ENCODE measurements at regions of chr11 and their contacts with region 1.

Region 1: DNA sequence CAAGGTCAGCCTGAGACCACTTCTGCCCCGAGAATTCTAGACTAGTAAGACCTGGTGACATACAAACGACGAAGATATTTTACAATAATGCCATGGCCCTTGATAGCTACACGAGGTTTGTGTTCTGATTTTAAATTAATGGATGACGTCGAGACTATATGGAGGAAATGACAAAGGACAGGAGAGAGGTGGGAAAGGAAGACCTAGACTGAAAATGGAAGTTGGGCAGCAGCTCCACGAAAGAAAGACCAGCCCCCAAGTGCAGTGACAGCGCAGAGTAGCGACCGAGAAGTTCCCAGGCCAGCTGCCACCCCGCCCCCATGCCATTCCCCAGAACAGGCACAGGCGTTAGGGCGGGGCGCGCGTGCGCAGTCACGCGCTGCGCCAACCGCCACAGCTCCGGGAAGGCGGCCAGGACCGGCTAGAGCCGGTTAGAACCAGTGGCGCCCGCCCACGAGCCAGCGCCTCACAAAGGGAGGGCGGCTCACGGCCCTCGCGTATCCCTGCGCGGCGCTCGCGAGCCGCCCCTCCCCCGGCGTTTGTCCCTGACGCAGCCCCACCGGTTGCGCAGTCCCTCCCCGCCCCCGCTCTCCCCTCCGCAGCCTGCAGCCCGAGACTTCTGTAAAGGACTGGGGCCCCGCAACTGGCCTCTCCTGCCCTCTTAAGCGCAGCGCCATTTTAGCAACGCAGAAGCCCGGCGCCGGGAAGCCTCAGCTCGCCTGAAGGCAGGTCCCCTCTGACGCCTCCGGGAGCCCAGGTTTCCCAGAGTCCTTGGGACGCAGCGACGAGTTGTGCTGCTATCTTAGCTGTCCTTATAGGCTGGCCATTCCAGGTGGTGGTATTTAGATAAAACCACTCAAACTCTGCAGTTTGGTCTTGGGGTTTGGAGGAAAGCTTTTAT is 1.5 kb upstream of the MALAT1 start:
- DNase-seq: peak; percentile 96 to 99 (median 98)
- ATAC-seq: peak; percentile 77 to 80
- H3K4me3 Mint-ChIP-seq: no peak overlapping the region
- H3K27ac Mint-ChIP-seq: no peak overlapping the region
- H3K4me1 Mint-ChIP-seq: peaks cover 16 to 31% (median 24%) of the 10 kb centered on the region in 4 donors
- H3K27me3 Mint-ChIP-seq: no peaks in the 10 kb centered on the region

Region 2: GRCh38 chr11:65354265-65355012 is 143.0 kb before region 1 on chr11 and contains the start of gene TIGD3:
- POLR2A ChIA-PET with region 1: interaction called, 11 read pairs
- DNase-seq: peak; percentile 94 to 99 (median 96)
- ATAC-seq: peak; percentile 95 to 96
- H3K4me3 Mint-ChIP-seq: peak within 1 kb of the TSS; percentile 84 to 96 (median 93)
- H3K27ac Mint-ChIP-seq: peak within 1 kb of the TSS; percentile 67 to 96 (median 86)
- H3K4me1 Mint-ChIP-seq: peaks cover 12 to 20% (median 17%) of the 10 kb centered on the region in 4 donors
- H3K27me3 Mint-ChIP-seq: no peaks in the 10 kb centered on the region
- polyA plus RNA-seq, gene TIGD3: 0.15 to 0.67 (median 0.21) TPM

Region 3: GRCh38 chr11:65432686-65433582 is 64.5 kb before region 1 on chr11:
- POLR2A ChIA-PET with region 1: interaction called, 2,047 read pairs
- DNase-seq: peak in 5 of 10 donors; percentile 37 to 74 (median 59)
- ATAC-seq: peak; percentile 31 to 54
- H3K4me3 Mint-ChIP-seq: peak overlapping the region in 6 of 10 donors; percentile 11 to 71 (median 48)
- H3K27ac Mint-ChIP-seq: peak overlapping the region; percentile 26 to 100 (median 82)
- H3K4me1 Mint-ChIP-seq: peaks cover 39 to 94% (median 79%) of the 10 kb centered on the region in 4 donors
- H3K27me3 Mint-ChIP-seq: no peaks in the 10 kb centered on the region

Region 4: DNA sequence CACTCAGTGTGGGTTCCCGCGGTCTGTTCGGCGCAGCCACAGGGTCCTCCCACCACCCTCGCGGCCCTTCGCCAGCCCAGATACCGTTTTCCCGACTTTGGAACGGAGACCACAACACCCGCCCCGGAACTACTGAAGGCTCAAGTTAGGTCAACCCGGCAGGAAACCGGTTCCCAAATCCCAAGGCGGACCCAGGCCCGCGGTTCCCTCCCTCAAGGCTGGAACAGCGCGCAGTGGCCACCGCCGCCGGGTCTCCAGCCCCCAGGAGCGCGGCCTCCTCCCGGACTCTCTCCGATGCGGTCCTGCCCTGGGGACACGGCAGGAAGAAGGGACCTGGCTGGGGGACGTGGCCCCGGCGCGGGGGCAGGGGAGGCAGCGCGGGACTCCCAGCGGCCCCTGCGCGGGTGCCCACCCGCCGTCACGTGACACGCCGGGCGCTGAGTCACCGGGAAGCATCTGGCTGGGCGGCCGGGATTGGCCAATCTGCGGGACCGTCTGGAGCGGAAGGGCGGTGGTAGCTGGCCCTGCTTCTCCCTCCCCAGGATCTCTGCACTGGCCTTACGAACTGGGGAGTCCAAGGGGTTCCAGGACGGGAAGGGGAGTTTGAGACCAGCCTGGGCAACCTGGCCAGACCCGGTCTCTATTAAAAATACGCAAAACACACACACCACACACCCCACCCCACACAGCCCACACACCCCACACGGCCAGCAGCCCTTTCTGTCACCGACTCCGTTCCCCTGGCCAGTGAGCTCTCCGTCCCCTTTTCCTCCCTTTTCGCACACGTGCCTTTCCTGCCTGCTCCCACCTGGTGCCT is 20.0 kb before region 1 on chr11:
- POLR2A ChIA-PET with region 1: interaction called, 959 read pairs
- DNase-seq: peak; percentile 68 to 91 (median 80)
- ATAC-seq: peak; percentile 85 to 90
- H3K4me3 Mint-ChIP-seq: peak overlapping the region; percentile 88 to 100 (median 100)
- H3K27ac Mint-ChIP-seq: peak overlapping the region; percentile 96 to 100 (median 99)
- H3K4me1 Mint-ChIP-seq: peaks cover 10 to 24% (median 19%) of the 10 kb centered on the region in 4 donors
- H3K27me3 Mint-ChIP-seq: peaks cover 0 to under 1% (median 0%) of the 10 kb centered on the region in 5 donors

Region 5: DNA sequence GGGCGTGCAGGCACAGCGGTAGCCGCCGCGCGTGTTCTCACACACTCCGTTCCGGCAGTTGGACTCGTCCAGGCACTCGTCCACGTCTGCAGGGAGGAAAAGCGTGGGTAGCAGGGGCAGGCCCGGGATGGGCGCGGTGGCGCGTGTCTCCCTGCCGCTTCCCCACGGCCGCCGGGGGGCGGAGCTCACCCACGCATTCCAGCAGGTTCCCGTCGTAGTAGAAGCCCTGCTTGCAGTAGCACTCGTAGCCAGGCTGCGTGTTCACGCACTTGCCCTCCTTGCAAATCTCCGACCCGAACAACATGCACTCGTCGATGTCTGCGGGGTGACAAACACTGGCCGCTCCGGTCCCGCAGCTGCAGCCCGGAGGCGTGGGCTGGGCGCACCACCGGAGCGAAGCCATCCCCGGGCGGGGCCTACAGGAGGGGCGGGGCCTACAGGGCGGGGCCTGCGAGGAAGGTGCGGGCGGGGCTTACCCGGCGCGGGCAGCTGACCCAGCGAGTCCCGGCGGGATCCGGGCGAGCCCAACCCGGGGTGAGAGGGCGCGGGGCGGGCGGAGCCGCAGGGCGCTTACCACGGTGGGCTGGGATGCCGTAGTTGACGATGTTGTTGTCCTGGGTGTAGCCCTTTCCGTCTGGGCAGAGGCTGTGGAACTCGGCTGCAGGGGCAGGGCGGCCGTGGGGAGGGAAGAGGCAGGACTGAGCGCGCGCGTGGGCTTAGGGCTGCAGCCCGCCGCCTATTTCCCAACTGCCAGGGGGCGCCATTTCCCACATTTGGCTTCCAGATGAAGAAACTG is 43.1 kb after region 1 on chr11:
- POLR2A ChIA-PET with region 1: interaction called, 27 read pairs
- DNase-seq: peak; percentile 79 to 99 (median 86)
- ATAC-seq: peak; percentile 77 to 84
- H3K4me3 Mint-ChIP-seq: peak overlapping the region; percentile 77 to 90 (median 85)
- H3K27ac Mint-ChIP-seq: peak overlapping the region; percentile 80 to 96 (median 86)
- H3K4me1 Mint-ChIP-seq: peaks cover 15 to 41% (median 31%) of the 10 kb centered on the region in 4 donors
- H3K27me3 Mint-ChIP-seq: no peaks in the 10 kb centered on the region

Region 6: GRCh38 chr11:65569973-65570918 is 72.9 kb after region 1 on chr11 and contains the start of gene ZNRD2:
- POLR2A ChIA-PET with region 1: interaction called, 43 read pairs
- DNase-seq: peak; percentile 95 to 99 (median 98)
- ATAC-seq: peak; percentile 64 to 78
- H3K4me3 Mint-ChIP-seq: peak within 1 kb of the TSS; percentile 97 to 100 (median 99)
- H3K27ac Mint-ChIP-seq: peak within 1 kb of the TSS; percentile 94 to 100 (median 99)
- H3K4me1 Mint-ChIP-seq: peaks cover 38 to 88% (median 75%) of the 10 kb centered on the region in 4 donors
- H3K27me3 Mint-ChIP-seq: no peaks in the 10 kb centered on the region
- polyA plus RNA-seq, gene ZNRD2: 62.9 to 86.3 (median 80.1) TPM

Region 7: DNA sequence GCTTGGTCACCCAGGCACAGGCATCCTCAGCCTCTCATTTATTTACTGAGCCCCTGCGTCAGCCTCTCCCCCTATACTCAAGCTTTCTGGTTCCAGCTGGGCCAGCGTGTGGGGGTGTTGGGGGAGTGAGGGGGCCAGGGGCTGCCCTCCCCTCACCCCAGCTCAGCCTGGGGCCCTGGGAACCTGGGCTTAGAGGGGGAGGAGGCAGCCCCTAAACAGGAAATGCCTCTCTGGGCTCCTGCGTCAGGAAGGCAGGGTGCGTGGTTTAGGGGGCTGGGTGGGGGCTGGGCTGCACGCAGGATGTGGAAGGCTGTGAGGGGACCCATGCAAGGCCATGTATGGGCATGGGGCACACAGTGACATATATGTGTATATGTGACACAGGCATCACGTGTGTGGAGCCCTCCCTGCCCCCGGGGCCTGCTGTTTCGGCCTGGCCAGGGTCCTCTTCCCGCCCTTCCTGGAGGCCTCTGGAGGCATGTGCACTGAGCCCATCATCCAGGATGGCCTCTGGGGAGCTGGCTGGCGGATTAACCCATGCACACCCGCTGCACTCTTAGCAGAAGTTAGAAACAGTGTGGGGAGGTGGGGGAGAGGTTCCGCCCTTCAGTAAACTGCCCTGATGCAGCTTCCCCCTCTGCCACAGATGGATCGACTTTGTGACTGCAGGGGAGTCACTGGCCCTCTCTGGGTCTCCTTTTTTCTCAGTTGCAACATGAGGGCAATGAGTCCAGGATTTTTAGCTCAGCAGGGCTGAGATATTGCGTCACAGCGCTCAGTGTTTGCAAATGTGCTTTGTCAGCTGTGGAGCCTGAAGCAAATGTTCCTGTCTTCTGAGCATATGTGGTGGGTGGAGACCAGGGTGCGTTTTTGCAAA is 820.6 kb after region 1 on chr11:
- POLR2A ChIA-PET with region 1: interaction called, 16 read pairs
- DNase-seq: peak; percentile 75 to 98 (median 93)
- ATAC-seq: peak; percentile 72 to 85
- H3K4me3 Mint-ChIP-seq: peak overlapping the region; percentile 73 to 97 (median 90)
- H3K27ac Mint-ChIP-seq: peak overlapping the region; percentile 84 to 100 (median 100)
- H3K4me1 Mint-ChIP-seq: peaks cover 36 to 76% (median 60%) of the 10 kb centered on the region in 4 donors
- H3K27me3 Mint-ChIP-seq: no peaks in the 10 kb centered on the region